Panc1 (cell line): ENCODE measurements at regions of chr10 and their contacts with region 1.

Region 1: DNA sequence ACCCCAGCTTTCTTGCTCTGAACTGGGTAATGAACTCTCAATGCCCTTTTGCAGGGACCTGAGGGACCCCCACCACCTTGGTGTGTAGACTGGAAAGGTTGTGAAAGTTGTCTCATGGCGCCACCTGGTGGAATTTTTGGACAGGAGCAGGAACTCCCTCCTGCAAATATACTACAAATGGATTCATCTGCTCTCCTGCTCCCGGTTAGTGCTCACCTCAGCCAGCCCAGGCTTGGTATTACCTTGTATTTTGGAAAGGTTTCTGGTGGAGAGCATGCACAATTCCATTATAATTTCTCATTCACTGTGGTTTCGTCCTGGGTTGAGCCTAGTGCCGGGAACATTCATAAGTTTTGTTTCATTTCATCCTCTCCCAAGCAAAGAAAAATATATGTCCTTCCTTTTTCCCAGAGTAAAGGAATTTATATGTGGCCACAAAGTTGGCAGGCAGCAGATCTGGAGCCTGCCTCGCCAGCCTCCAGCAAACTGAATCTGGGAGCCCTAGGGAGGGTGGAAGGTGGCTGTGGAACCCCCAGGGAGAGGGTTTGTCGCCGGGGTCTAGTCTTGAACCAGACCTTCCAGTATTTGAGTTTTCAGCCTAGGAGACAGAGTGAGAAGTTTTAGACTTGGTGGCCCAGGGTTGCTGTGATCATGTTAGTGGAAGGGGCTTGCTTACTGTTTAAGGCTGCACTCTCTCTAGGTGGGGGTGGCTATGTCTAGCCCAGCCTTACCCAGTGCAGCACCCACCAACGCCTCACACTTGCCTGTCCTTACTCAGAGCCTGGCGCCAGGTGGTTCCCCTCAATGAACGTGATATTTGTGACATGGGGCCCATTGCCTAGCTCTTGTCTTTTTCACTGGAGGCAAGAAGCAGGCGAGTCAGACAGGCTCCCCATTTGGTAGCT is 9.5 kb downstream of the FAM241B start:
- DNase-seq: peak; percentile 51
- ATAC-seq: peak; percentile 79
- H3K4me3 ChIP-seq: no peak overlapping the region
- H3K27ac ChIP-seq: no peak overlapping the region
- H3K4me1 ChIP-seq: no peaks in the 10 kb centered on the region
- H3K27me3 ChIP-seq: no peaks in the 10 kb centered on the region
- CTCF ChIP-seq: peak; percentile 97

Region 2: GRCh38 chr10:69408318-69409175 is 231.0 kb before region 1 on chr10:
- CTCF ChIA-PET with region 1: interaction called, 18 read pairs
- POLR2A ChIA-PET with region 1: no interaction called
- in situ Hi-C with region 1: no loop called
- intact Hi-C with region 1: loop called (anchors 5 kb)
- DNase-seq: no peak
- ATAC-seq: peak; percentile 95
- H3K4me3 ChIP-seq: peak overlapping the region; percentile 34 to 48
- H3K27ac ChIP-seq: peak overlapping the region; percentile 86
- H3K4me1 ChIP-seq: peaks cover 17% of the 10 kb centered on the region; the same call in 1 of the 2 replicates
- H3K27me3 ChIP-seq: no peaks in the 10 kb centered on the region
- CTCF ChIP-seq: peak; percentile 93

Region 3: GRCh38 chr10:69573056-69573806 is 66.3 kb before region 1 on chr10 and contains the start of gene NEUROG3:
- CTCF ChIA-PET with region 1: no interaction called
- POLR2A ChIA-PET with region 1: no interaction called
- in situ Hi-C with region 1: no loop called
- intact Hi-C with region 1: no loop called
- DNase-seq: no peak
- ATAC-seq: no peak
- H3K4me3 ChIP-seq: peak within 1 kb of the TSS; percentile 25 to 51
- H3K27ac ChIP-seq: no peak within 1 kb of the TSS
- H3K4me1 ChIP-seq: peaks cover 25% of the 10 kb centered on the region
- H3K27me3 ChIP-seq: peaks cover 89% of the 10 kb centered on the region
- CTCF ChIP-seq: no peak
- total RNA-seq, gene NEUROG3: not detected